Aorta (tissue), 5 donors: ENCODE measurements at regions of chr5 and their contacts with region 1.

Region 1: DNA sequence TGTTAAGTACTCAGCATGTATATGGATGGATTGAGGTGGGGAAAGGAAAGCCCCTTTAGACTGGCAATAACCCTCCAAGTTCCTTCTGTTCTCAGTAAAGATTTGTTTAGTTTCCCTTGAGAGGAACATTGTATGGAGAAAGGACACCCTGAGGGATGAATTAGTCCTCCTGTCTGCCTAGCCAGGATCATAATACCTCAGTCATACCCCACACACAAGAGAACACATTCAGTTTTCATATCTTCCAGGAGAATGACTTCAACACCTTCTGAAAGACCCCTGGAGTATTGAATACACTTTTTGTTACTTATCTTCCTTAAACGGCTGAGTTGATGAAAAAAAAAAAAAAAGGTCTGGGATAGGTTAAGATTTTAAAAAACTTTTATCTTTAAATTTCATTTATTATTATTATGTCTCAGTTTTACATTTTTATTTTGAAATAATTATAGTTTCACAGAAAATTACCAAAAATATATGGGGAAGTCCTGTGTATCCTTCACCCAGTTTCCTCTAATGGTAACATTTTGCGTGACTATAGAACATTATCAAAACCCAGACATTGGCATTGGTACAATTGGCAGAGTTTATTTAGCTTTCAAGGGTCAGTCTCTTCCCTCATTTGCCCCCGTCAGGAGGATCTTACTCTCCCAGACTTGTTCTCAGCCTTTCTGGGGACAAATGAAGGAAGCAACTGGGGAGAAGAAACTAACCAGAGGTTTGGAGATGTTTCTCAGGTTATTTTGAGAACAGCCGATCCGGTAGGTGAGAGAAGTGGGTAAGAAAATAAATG is 88.0 kb downstream of the ACTBL2 start:
- DNase-seq: no peak
- ATAC-seq: no peak
- H3K4me3 ChIP-seq: no peak overlapping the region
- H3K27ac ChIP-seq: no peak overlapping the region
- H3K4me1 ChIP-seq: peaks cover 0 to 2% of the 10 kb centered on the region in 2 donors
- H3K27me3 ChIP-seq: no peaks in the 10 kb centered on the region

Region 2: GRCh38 chr5:57411982-57412381 is 17.4 kb after region 1 on chr5:
- intact Hi-C with region 1: no loop called
- DNase-seq: no peak
- ATAC-seq: peak; percentile 53
- H3K4me3 ChIP-seq: no peak overlapping the region
- H3K27ac ChIP-seq: peak overlapping the region in 1 of 2 donors; percentile 57
- H3K4me1 ChIP-seq: peaks cover 17 to 20% of the 10 kb centered on the region in 2 donors
- H3K27me3 ChIP-seq: no peaks in the 10 kb centered on the region

Region 3: GRCh38 chr5:57764479-57765089 is 370.0 kb after region 1 on chr5:
- intact Hi-C with region 1: loop called in 1 of 2 experiments (anchors 5 kb)
- DNase-seq: no peak
- ATAC-seq: no peak
- H3K4me3 ChIP-seq: no peak overlapping the region
- H3K27ac ChIP-seq: no peak overlapping the region
- H3K4me1 ChIP-seq: no peaks in the 10 kb centered on the region
- H3K27me3 ChIP-seq: no peaks in the 10 kb centered on the region